Mammary epithelial cell (primary cell): ENCODE measurements at regions of chr16 and their contacts with region 1.

Region 1: GRCh38 chr16:87416826-87417527 is 24.8 kb downstream of the MAP1LC3B start:
- DNase-seq: no peak
- H3K4me3 ChIP-seq: no peak overlapping the region
- H3K27ac ChIP-seq: no peak overlapping the region
- H3K4me1 ChIP-seq: no peaks in the 10 kb centered on the region
- H3K27me3 ChIP-seq: no peaks in the 10 kb centered on the region
- CTCF ChIP-seq: peak; percentile 49 to 61

Region 2: GRCh38 chr16:87461466-87461991 is 44.6 kb after region 1 on chr16:
- CTCF ChIA-PET with region 1: no interaction called
- dilution Hi-C with region 1: no loop called
- in situ Hi-C with region 1: no loop called
- intact Hi-C with region 1: no loop called
- DNase-seq: peak; percentile 93
- H3K4me3 ChIP-seq: peak overlapping the region; percentile 16 to 47 (median 29)
- H3K27ac ChIP-seq: no peak overlapping the region
- H3K4me1 ChIP-seq: peaks cover 45% of the 10 kb centered on the region
- H3K27me3 ChIP-seq: no peaks in the 10 kb centered on the region
- CTCF ChIP-seq: peak; percentile 63 to 76

Region 3: GRCh38 chr16:87487361-87488001 is 70.5 kb after region 1 on chr16:
- CTCF ChIA-PET with region 1: no interaction called
- dilution Hi-C with region 1: no loop called
- in situ Hi-C with region 1: no loop called
- intact Hi-C with region 1: loop called (anchors 2 kb)
- DNase-seq: peak; percentile 88
- H3K4me3 ChIP-seq: peak overlapping the region; percentile 15 to 49 (median 40)
- H3K27ac ChIP-seq: peak overlapping the region; percentile 32
- H3K4me1 ChIP-seq: peaks cover 65% of the 10 kb centered on the region
- H3K27me3 ChIP-seq: no peaks in the 10 kb centered on the region
- CTCF ChIP-seq: no peak

Region 4: DNA sequence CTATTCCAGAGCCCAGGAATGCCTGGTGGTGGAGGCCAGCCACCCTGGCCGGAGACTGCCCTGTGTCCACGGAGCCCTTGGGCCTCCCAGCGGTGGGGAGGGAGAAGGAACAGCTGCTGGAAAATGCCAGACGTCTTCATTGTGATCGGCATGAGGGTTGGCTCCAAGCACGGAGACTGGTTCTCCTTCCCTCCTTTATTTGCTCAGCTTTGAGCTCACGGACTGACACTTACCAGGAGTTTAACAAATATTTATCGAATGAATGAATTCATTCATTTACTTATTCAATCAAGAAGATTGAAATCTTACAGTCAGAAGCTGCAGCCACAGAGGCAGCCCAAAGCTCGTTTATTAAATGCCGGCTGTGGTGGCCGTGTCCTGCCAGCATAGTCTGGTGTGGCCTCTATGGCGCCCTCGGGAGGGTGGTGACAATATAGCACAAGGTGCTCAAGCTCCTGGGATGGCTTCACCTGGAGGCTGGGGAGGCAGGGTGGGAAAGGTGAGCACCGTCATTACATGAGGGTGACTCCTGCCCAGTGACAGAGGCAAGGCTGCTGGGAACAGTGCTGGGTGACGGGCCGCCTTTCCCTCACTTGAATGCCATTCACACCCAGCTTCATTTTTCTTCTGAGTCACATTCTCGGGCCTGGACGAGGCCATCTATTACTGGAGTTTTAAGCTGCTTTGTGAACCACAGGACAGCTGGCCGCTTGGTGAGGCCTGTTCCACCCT is 154.3 kb after region 1 on chr16:
- CTCF ChIA-PET with region 1: no interaction called
- dilution Hi-C with region 1: no loop called
- in situ Hi-C with region 1: no loop called
- intact Hi-C with region 1: loop called (anchors 1 kb)
- DNase-seq: no peak
- H3K4me3 ChIP-seq: no peak overlapping the region
- H3K27ac ChIP-seq: no peak overlapping the region
- H3K4me1 ChIP-seq: no peaks in the 10 kb centered on the region
- H3K27me3 ChIP-seq: peaks cover 5% of the 10 kb centered on the region
- CTCF ChIP-seq: peak in 1 of 2 donors; percentile 60

Region 5: DNA sequence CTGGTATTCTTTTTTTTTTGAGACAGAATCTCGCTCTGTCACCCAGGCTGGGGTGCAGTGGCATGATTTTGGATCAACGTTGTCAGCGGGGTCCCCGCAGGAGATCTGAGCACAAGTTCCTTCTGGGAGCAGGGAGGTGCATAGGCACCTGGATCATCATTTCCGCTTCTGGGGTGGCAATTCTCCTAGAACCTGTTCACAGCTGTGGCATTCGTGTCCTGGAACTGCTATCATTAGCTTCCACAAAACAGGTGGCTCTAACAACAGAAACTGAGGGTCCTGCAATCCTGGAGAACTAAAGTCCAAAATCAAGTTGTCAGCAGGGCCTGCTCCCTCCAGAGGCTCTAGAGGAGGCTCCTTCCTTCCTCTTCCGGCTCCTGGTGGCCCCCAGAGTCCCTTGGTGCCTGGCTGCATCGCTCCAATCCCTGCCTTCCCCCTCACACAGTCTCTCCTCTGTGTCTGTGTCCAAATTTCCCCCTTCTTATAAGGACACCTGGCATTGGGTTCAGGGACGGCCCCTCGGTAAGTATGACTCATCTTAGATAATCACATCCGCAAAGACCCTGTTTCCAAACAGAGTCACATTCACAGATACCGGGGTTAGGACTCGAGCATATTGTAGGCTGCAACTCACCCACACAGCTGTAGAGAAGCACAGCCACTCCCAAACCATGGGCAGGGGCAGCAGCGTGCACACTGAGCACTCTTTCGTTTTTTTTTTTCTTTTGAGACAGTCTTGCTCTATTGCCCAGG is 392.3 kb after region 1 on chr16:
- CTCF ChIA-PET with region 1: no interaction called
- dilution Hi-C with region 1: no loop called
- in situ Hi-C with region 1: no loop called
- intact Hi-C with region 1: no loop called
- DNase-seq: no peak
- H3K4me3 ChIP-seq: no peak overlapping the region
- H3K27ac ChIP-seq: no peak overlapping the region
- H3K4me1 ChIP-seq: peaks cover 47% of the 10 kb centered on the region
- H3K27me3 ChIP-seq: no peaks in the 10 kb centered on the region
- CTCF ChIP-seq: no peak